Ascending aorta (tissue), 2 donors: ENCODE measurements at regions of chr1 and their contacts with region 1.

Region 1: GRCh38 chr1:100921109-100921706 is 25.3 kb downstream of the SLC30A7 start:
- DNase-seq: no peak
- H3K4me3 ChIP-seq: no peak overlapping the region
- H3K27ac ChIP-seq: no peak overlapping the region
- H3K4me1 ChIP-seq: no peaks in the 10 kb centered on the region
- H3K27me3 ChIP-seq: no peaks in the 10 kb centered on the region
- CTCF ChIP-seq: peak; percentile 45 to 75 (median 59)

Region 2: GRCh38 chr1:100799954-100800612 is 121.1 kb before region 1 on chr1:
- intact Hi-C with region 1: no loop called
- DNase-seq: no peak
- H3K4me3 ChIP-seq: no peak overlapping the region
- H3K27ac ChIP-seq: no peak overlapping the region
- H3K4me1 ChIP-seq: no peaks in the 10 kb centered on the region
- H3K27me3 ChIP-seq: no peaks in the 10 kb centered on the region
- CTCF ChIP-seq: no peak

Region 3: DNA sequence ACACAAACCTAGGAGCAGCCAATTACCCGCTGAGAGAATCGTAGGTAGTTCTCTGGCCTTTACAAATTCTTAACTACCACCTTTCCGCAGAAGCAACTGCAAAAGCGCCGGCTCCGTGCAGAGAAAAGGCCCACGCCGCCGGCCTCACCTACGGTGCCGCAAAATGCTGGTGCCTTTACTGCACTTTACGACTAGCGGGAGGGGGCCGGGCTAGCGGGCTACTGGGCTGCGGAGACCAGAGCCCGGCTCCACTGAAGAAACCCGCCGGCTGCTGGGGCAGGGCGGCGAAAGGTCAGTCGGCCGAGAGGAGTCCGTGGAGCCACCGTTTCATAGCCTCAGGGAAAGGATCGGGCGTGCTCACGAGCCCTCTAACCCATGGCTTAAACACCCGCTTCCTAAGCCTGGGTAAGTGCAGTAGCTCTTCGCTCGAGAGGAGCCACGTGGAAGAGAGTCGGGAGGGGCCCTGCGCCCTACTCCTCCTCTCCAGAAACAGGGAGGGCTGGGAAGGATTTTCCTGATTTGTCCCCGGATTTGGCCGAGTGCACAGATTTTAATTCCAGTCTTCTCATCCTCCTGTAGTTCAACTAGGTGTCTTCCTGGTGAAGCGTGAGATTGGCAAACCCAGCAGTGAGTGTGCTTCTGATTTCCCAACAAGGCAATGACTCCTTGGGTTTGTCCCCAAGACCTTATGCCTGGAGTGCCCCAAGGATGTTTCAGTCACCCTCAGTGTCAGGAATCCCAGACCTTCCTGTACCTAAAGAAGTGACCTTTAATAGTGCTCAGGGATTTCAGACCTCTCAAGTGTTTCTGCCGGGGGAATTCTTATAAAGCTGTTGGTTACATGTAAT is 104.7 kb after region 1 on chr1 and contains the start of gene DPH5:
- intact Hi-C with region 1: loop called (anchors 5 kb)
- DNase-seq: peak; percentile 45 to 94
- H3K4me3 ChIP-seq: peak within 1 kb of the TSS; percentile 76 to 82
- H3K27ac ChIP-seq: peak within 1 kb of the TSS; percentile 73 to 80
- H3K4me1 ChIP-seq: peaks cover 0 to 11% of the 10 kb centered on the region in 2 donors
- H3K27me3 ChIP-seq: no peaks in the 10 kb centered on the region
- CTCF ChIP-seq: peak in 1 of 3 experiments; percentile 4
- total RNA-seq, gene DPH5: 1.1 TPM

Region 4: GRCh38 chr1:101148980-101149379 is 227.8 kb after region 1 on chr1:
- intact Hi-C with region 1: loop called (anchors 10 kb)
- DNase-seq: peak in 1 of 2 donors; percentile 68
- H3K4me3 ChIP-seq: no peak overlapping the region
- H3K27ac ChIP-seq: peak overlapping the region; percentile 4 to 21
- H3K4me1 ChIP-seq: peaks cover 0 to 25% of the 10 kb centered on the region in 2 donors
- H3K27me3 ChIP-seq: no peaks in the 10 kb centered on the region
- CTCF ChIP-seq: no peak

Region 5: GRCh38 chr1:101288491-101288944 is 367.3 kb after region 1 on chr1:
- intact Hi-C with region 1: loop called (anchors 1 kb)
- DNase-seq: peak in 1 of 2 donors; percentile 81
- H3K4me3 ChIP-seq: no peak overlapping the region
- H3K27ac ChIP-seq: no peak overlapping the region
- H3K4me1 ChIP-seq: no peaks in the 10 kb centered on the region
- H3K27me3 ChIP-seq: no peaks in the 10 kb centered on the region
- CTCF ChIP-seq: peak; percentile 67 to 92 (median 90)